ENCODE measurements at regions of chr10 and their contacts with region 1.

Region 1: GRCh38 chr10:122435212-122435827 is 19.1 kb upstream of the ARMS2 start:
- H3K4me3 Mint-ChIP-seq: no peak overlapping the region
- H3K27ac Mint-ChIP-seq: no peak overlapping the region
- H3K4me1 Mint-ChIP-seq: no peaks in the 10 kb centered on the region
- H3K27me3 Mint-ChIP-seq: no peaks in the 10 kb centered on the region

Region 2: GRCh38 chr10:122298598-122299301 is 136.6 kb before region 1 on chr10:
- intact Hi-C with region 1: loop called (anchors 1 kb)
- H3K4me3 Mint-ChIP-seq: no peak overlapping the region
- H3K27ac Mint-ChIP-seq: no peak overlapping the region
- H3K4me1 Mint-ChIP-seq: no peaks in the 10 kb centered on the region
- H3K27me3 Mint-ChIP-seq: peaks cover 8% of the 10 kb centered on the region

Region 3: GRCh38 chr10:122342293-122343134 is 92.8 kb before region 1 on chr10:
- intact Hi-C with region 1: loop called (anchors 1 kb)
- H3K4me3 Mint-ChIP-seq: no peak overlapping the region
- H3K27ac Mint-ChIP-seq: no peak overlapping the region
- H3K4me1 Mint-ChIP-seq: peaks cover 11% of the 10 kb centered on the region
- H3K27me3 Mint-ChIP-seq: peaks cover 13% of the 10 kb centered on the region